Activated CD4-positive, alpha-beta memory T cell treated with anti-CD3 and anti-CD28 coated beads for 36 hours (primary cell): ENCODE measurements at regions of chr12 and their contacts with region 1.

Region 1: DNA sequence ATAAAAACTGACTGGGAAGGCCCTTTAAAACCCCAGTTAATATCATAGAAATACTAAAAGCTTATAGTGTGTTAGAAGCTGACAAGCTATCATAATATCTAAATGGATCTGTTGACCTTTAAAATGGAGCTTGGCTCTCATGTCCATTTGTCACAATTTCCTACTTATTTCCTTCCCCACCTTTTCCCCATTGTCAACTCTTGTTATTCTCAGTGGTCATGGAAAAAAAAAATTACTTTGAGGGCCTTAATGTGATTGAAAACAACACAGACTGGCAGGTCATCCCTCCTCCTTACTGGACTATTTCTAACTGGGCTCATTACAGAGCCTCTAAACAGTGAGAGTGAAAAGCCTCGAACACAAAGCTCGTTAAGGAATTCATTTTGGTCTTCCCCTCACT is 13.7 kb upstream of the WNK1 start:
- DNase-seq: no peak
- H3K4me3 Mint-ChIP-seq: no peak overlapping the region
- H3K27ac Mint-ChIP-seq: no peak overlapping the region
- H3K4me1 Mint-ChIP-seq: peaks cover 15% of the 10 kb centered on the region
- H3K27me3 Mint-ChIP-seq: no peaks in the 10 kb centered on the region

Region 2: DNA sequence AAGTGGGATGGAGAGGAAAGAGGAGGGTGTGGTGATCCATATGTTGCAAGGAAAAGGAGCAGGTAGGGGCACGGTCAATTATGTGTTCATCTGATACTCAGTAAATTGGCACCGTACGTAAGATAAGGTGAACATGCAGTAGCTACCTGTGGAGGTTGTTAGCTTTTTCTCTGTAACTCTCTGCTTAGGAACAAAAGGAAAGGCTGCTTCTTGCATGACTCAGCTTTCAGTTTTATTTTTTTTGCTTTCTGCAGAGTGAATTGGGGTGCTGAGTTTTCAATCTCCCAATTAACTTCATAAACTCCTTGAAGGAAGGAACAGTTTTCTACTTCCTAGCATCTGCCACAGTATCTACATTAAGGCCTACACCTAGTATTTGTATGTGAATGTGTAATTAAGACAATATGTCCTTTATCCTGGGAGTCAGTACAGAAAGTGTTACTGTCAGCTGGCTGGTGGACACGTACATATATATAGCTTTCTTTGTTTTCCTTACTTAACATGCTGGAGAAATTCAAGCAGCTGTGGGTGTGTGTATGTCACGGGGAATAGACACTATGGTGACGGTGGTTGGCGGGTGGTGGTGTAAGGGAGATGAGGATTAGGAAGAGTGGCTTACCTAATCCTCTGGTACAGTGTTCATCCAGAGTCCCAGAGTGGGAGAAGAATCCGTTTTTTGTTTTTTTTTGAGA is 26.4 kb before region 1 on chr12:
- CTCF ChIA-PET with region 1: no interaction called
- POLR2A ChIA-PET with region 1: no interaction called
- intact Hi-C with region 1: loop called (anchors 1 kb)
- DNase-seq: no peak
- H3K4me3 Mint-ChIP-seq: no peak overlapping the region
- H3K27ac Mint-ChIP-seq: no peak overlapping the region
- H3K4me1 Mint-ChIP-seq: peaks cover 27% of the 10 kb centered on the region
- H3K27me3 Mint-ChIP-seq: no peaks in the 10 kb centered on the region

Region 3: DNA sequence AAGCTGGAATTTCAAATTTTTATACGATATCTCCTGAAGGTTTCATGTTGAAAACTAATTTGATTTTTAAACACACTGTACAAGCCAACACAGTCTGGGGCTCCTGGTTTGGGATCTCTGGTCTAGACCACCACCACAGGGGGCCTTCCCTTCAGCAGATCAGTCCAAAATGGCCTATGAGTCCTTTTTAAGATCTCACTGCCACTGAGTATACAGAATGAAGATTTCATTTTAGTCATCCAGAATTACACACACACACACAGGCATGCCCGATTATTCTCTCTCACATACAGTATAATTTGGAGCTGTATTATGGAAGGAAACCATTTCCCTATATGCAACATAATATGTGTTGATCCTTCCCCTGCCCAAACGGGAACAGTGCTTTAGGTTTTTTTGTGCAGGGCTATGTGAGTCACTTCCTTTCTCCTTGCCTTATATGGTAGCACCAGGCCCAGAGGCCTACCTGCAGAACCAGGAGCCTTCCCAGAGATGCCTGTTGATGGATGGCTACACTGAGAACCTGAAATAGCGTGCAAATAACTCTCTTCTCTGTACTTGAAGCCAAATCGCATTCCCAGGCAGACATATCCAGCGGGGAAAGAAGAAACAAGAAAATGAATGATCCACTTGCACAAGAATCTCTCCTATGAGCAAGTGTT is 14.4 kb before region 1 on chr12:
- CTCF ChIA-PET with region 1: interaction called, 4 read pairs
- POLR2A ChIA-PET with region 1: no interaction called
- intact Hi-C with region 1: loop called (anchors 1 kb)
- DNase-seq: peak; percentile 44
- H3K4me3 Mint-ChIP-seq: no peak overlapping the region
- H3K27ac Mint-ChIP-seq: peak overlapping the region; percentile 10
- H3K4me1 Mint-ChIP-seq: peaks cover 67% of the 10 kb centered on the region
- H3K27me3 Mint-ChIP-seq: no peaks in the 10 kb centered on the region

Region 4: DNA sequence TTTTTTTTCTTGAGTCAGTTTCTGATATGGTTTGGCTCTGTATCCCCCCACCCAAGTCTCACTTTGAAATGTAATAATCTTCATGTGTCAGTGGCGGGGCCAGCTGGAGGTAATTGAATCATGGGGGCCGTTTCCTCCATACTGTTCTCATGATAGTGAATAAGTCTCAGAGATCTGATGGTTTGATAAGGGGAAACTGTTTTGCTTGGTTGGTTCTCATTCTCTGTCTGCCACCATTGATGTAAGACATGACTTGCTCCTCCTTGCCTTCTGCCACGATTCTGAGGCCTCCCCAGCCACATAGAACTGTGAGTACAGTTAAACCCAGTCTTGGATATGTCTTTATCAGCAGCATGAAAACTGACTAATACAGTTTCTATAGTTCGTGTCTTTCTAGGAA is 56.6 kb after region 1 on chr12:
- CTCF ChIA-PET with region 1: no interaction called
- POLR2A ChIA-PET with region 1: no interaction called
- intact Hi-C with region 1: loop called (anchors 1 kb)
- DNase-seq: peak; percentile 85
- H3K4me3 Mint-ChIP-seq: peak overlapping the region; percentile 35
- H3K27ac Mint-ChIP-seq: peak overlapping the region; percentile 79
- H3K4me1 Mint-ChIP-seq: peaks cover 81% of the 10 kb centered on the region
- H3K27me3 Mint-ChIP-seq: no peaks in the 10 kb centered on the region

Region 5: GRCh38 chr12:958588-959123 is 219.9 kb after region 1 on chr12:
- CTCF ChIA-PET with region 1: no interaction called
- POLR2A ChIA-PET with region 1: no interaction called
- intact Hi-C with region 1: no loop called
- DNase-seq: no peak
- H3K4me3 Mint-ChIP-seq: no peak overlapping the region
- H3K27ac Mint-ChIP-seq: no peak overlapping the region
- H3K4me1 Mint-ChIP-seq: peaks cover 4% of the 10 kb centered on the region
- H3K27me3 Mint-ChIP-seq: no peaks in the 10 kb centered on the region